ENCODE measurements at regions of chr12 and their contacts with region 1.

Region 1: GRCh38 chr12:109844983-109845823 is 12.0 kb upstream of the TRPV4 start:
- DNase-seq: peak; percentile 79
- H3K4me3 ChIP-seq: peak overlapping the region in 1 of 3 experiments; percentile 35
- H3K27ac ChIP-seq: no peak overlapping the region
- H3K4me1 ChIP-seq: peaks cover 5% of the 10 kb centered on the region
- H3K27me3 ChIP-seq: no peaks in the 10 kb centered on the region
- CTCF ChIP-seq: peak; percentile 99 to 100
- POLR2A ChIP-seq: no peak

Region 2: GRCh38 chr12:109346920-109347319 is 498.3 kb before region 1 on chr12:
- CTCF ChIA-PET with region 1: no interaction called
- POLR2A ChIA-PET with region 1: no interaction called
- dilution Hi-C with region 1: no loop called
- intact Hi-C with region 1: no loop called
- DNase-seq: no peak
- H3K4me3 ChIP-seq: no peak overlapping the region
- H3K27ac ChIP-seq: no peak overlapping the region
- H3K4me1 ChIP-seq: no peaks in the 10 kb centered on the region
- H3K27me3 ChIP-seq: no peaks in the 10 kb centered on the region
- CTCF ChIP-seq: no peak
- POLR2A ChIP-seq: no peak

Region 3: DNA sequence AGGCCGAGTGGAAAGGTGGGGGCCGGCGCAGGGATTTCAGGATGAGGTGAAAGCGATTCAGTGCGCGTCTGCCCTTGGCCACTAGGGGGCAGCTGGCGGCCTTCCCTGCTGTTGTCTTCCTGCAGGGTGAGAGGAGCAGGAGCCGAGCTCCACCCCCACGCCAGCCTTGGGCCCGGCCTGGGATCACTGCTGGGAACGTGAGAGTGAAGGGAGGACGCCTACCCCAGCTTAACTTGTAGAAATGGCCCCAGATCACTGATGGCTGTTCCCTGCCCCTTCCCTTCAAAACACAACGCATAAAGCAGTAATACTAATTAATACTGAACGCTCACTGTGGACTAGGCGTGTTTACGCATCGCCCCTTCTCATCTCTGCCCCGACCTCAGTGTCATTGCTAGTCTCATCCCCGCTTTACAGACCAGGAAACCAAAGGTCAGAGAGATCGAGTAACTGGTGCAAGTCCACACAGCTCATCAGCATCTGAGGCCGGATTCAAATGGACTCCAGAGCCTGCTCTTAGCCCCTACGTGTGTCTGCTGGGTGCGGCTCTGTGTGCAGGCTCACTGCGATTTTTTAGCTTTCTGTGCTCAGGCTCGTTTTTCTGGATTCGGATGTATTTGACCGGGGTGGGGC is 247.3 kb before region 1 on chr12:
- CTCF ChIA-PET with region 1: interaction called, 14 read pairs
- POLR2A ChIA-PET with region 1: no interaction called
- dilution Hi-C with region 1: no loop called
- intact Hi-C with region 1: loop called (anchors 2 kb)
- DNase-seq: peak; percentile 78
- H3K4me3 ChIP-seq: no peak overlapping the region
- H3K27ac ChIP-seq: no peak overlapping the region
- H3K4me1 ChIP-seq: peaks cover 3% of the 10 kb centered on the region
- H3K27me3 ChIP-seq: no peaks in the 10 kb centered on the region
- CTCF ChIP-seq: peak; percentile 95 to 100
- POLR2A ChIP-seq: no peak

Region 4: DNA sequence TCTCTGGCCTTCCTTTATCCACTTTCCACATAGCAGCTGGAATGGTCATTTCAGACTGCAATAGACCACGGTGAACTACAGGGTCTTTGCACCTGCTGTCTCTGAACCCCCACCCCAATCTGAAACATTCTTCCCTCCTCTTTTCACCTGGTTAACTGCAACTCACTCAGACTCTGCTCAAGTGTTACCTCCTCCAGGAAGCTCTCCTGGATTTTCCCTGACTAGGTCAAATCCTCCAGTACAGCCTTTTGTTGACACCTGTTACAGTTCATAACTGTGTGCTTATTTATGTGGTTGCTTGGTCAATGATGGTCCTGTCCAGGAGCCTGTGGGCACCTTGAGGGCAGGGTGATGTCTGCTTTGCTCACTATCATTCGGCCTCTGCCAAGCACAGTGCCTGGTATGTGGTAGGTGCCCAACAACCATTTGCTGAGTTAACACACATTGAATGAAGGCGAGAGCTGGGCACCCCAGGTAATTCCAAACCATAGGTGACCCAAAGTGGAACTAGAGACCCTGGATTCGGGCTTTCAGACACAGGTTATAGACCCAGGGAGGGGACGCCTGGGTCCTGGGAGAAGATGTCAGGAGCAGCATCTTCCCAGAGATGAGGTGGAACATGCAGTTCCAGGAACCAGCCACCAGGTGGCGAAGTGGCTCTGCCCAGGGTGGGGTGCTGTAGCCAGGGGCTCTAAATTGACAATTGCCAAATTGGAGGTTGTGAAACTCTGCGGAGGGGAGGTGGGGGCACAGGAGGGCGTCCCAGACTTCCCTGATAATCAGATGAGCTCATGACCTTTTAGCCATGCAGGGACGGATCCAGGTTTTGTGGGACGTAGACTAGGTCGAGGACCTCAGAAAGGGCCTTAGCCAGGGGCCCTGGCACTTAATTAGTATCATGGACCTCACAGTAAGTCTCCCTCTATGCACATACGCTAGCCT is 40.1 kb before region 1 on chr12:
- CTCF ChIA-PET with region 1: interaction called, 159 read pairs
- POLR2A ChIA-PET with region 1: no interaction called
- dilution Hi-C with region 1: no loop called
- intact Hi-C with region 1: loop called (anchors 1 kb)
- DNase-seq: peak; percentile 53
- H3K4me3 ChIP-seq: no peak overlapping the region
- H3K27ac ChIP-seq: no peak overlapping the region
- H3K4me1 ChIP-seq: no peaks in the 10 kb centered on the region
- H3K27me3 ChIP-seq: no peaks in the 10 kb centered on the region
- CTCF ChIP-seq: peak; percentile 90 to 96
- POLR2A ChIP-seq: no peak

Region 5: GRCh38 chr12:109828236-109828550 is 17.0 kb before region 1 on chr12:
- CTCF ChIA-PET with region 1: interaction called, 52 read pairs
- POLR2A ChIA-PET with region 1: no interaction called
- dilution Hi-C with region 1: no loop called
- intact Hi-C with region 1: no loop called
- DNase-seq: peak; percentile 44
- H3K4me3 ChIP-seq: no peak overlapping the region
- H3K27ac ChIP-seq: peak overlapping the region; percentile 32
- H3K4me1 ChIP-seq: peaks cover 11% of the 10 kb centered on the region
- H3K27me3 ChIP-seq: no peaks in the 10 kb centered on the region
- CTCF ChIP-seq: no peak
- POLR2A ChIP-seq: no peak

Region 6: GRCh38 chr12:109927622-109928021 is 82.4 kb after region 1 on chr12:
- CTCF ChIA-PET with region 1: interaction called, 147 read pairs
- POLR2A ChIA-PET with region 1: no interaction called
- dilution Hi-C with region 1: no loop called
- intact Hi-C with region 1: loop called (anchors 1 kb)
- DNase-seq: peak; percentile 47
- H3K4me3 ChIP-seq: no peak overlapping the region
- H3K27ac ChIP-seq: no peak overlapping the region
- H3K4me1 ChIP-seq: no peaks in the 10 kb centered on the region
- H3K27me3 ChIP-seq: no peaks in the 10 kb centered on the region
- CTCF ChIP-seq: peak; percentile 69 to 83
- POLR2A ChIP-seq: no peak

Region 7: DNA sequence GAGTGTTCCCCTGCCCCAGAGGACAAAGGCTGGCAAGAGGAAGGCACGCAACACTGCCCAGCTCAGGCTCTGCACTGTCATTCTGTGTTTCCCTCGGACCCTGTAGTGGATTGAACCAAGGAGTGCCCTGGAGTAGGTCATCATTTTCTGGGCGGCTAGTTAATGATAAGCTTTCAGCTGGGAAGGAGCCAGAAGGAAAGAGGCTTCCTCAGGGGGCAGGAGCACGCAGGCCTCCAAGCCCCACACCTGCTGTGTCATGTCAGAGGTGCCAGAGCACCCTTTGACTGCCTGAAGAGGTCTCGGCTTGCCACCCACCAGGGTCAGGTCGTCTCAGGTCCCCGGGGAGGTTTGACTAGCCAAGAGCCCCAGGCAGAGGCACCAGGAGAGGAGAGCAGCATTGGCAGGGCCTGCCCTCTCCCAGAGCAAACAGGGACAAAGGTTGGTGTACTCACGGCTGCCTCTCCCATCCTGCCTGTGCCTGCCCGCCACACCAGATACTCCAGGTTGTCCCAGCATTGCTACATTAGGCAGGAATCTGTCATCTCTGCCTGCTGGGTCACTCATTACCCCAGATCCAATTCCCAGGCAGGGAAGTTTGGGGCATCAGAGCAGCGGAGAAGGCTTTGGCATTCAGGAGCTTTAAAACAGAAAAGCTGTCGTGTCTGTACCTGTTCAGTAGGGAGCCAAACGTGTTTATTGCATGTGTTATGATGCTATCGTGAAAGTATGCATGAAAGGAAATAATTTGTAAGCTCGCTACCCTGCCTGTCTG is 402.3 kb after region 1 on chr12:
- CTCF ChIA-PET with region 1: no interaction called
- POLR2A ChIA-PET with region 1: no interaction called
- dilution Hi-C with region 1: no loop called
- intact Hi-C with region 1: no loop called
- DNase-seq: no peak
- H3K4me3 ChIP-seq: no peak overlapping the region
- H3K27ac ChIP-seq: no peak overlapping the region
- H3K4me1 ChIP-seq: no peaks in the 10 kb centered on the region
- H3K27me3 ChIP-seq: no peaks in the 10 kb centered on the region
- CTCF ChIP-seq: no peak
- POLR2A ChIP-seq: no peak